CD8-positive, alpha-beta memory T cell (primary cell): ENCODE measurements at regions of chr12 and their contacts with region 1.

Region 1: GRCh38 chr12:48681738-48682532 is at the start of gene KANSL2:
- DNase-seq: peak; percentile 95 to 98 (median 96)
- H3K4me3 ChIP-seq: peak within 1 kb of the TSS; percentile 99
- H3K4me3 Mint-ChIP-seq: peak within 1 kb of the TSS; percentile 97 to 99 (median 98)
- H3K27ac ChIP-seq: peak within 1 kb of the TSS; percentile 96
- H3K27ac Mint-ChIP-seq: peak within 1 kb of the TSS; percentile 95 to 99 (median 98)
- H3K4me1 ChIP-seq: peaks cover 36% of the 10 kb centered on the region
- H3K4me1 Mint-ChIP-seq: peaks cover 46 to 58% (median 56%) of the 10 kb centered on the region in 3 donors
- H3K27me3 ChIP-seq: no peaks in the 10 kb centered on the region
- H3K27me3 Mint-ChIP-seq: no peaks in the 10 kb centered on the region
- total RNA-seq, gene KANSL2: 58.7 to 60.3 TPM

Region 2: DNA sequence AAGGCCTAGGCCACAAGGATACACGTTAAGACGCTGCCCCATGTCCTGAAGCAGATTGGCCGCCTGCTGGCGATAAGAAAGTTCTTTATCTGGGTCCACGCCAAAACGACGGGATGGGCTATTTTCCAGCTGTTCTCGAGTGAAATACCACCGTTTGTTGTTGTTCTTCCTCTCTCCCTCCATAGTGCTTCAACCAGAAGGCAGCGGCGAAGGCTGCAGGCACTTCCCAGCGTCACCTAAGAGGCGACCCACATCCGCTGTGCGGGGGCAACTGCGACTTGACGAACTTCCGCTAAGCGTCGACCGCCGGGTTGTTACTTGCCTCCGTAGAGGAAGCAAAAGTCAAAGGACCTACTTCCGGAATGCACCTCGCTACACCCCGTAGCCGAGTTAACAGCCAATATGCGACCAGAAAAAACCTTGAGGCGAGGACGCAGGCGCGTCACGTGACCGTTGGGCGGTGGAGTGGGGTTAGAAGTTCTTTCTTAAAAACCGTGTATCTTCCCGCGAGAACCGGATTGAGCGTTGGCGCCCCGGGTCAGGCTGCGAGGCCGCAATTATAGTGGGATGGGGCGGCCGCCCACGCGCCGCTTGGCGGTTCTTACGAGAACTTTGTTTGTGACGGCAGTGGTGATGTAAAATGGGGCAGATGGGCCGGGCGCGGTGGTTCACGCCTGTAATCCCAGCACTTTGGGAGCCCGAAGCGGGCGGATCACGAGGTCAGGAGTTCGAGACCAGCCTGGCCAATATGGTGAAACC is 34.7 kb after region 1 on chr12 and contains the start of gene CCNT1:
- CTCF ChIA-PET with region 1: interaction called, 4 read pairs
- POLR2A ChIA-PET with region 1: interaction called, 11 read pairs
- DNase-seq: peak; percentile 95 to 100 (median 99)
- H3K4me3 ChIP-seq: peak within 1 kb of the TSS; percentile 91
- H3K4me3 Mint-ChIP-seq: peak within 1 kb of the TSS; percentile 90 to 97 (median 93)
- H3K27ac ChIP-seq: peak within 1 kb of the TSS; percentile 96
- H3K27ac Mint-ChIP-seq: peak within 1 kb of the TSS; percentile 91 to 100 (median 99)
- H3K4me1 ChIP-seq: peaks cover 30% of the 10 kb centered on the region
- H3K4me1 Mint-ChIP-seq: peaks cover 41 to 52% (median 47%) of the 10 kb centered on the region in 3 donors
- H3K27me3 ChIP-seq: no peaks in the 10 kb centered on the region
- H3K27me3 Mint-ChIP-seq: no peaks in the 10 kb centered on the region
- total RNA-seq, gene CCNT1: 59.1 to 66.4 TPM